ENCODE measurements at regions of chr10 and their contacts with region 1.

Region 1: GRCh38 chr10:77641788-77642397 is 4.3 kb upstream of the KCNMA1 start:
- DNase-seq: peak; percentile 45
- H3K4me3 ChIP-seq: no peak overlapping the region
- CTCF ChIP-seq: peak; percentile 50

Region 2: GRCh38 chr10:77251297-77252013 is 390.4 kb before region 1 on chr10:
- CTCF ChIA-PET with region 1: interaction called, 41 read pairs
- POLR2A ChIA-PET with region 1: no interaction called
- DNase-seq: no peak
- H3K4me3 ChIP-seq: no peak overlapping the region
- CTCF ChIP-seq: peak; percentile 68

Region 3: DNA sequence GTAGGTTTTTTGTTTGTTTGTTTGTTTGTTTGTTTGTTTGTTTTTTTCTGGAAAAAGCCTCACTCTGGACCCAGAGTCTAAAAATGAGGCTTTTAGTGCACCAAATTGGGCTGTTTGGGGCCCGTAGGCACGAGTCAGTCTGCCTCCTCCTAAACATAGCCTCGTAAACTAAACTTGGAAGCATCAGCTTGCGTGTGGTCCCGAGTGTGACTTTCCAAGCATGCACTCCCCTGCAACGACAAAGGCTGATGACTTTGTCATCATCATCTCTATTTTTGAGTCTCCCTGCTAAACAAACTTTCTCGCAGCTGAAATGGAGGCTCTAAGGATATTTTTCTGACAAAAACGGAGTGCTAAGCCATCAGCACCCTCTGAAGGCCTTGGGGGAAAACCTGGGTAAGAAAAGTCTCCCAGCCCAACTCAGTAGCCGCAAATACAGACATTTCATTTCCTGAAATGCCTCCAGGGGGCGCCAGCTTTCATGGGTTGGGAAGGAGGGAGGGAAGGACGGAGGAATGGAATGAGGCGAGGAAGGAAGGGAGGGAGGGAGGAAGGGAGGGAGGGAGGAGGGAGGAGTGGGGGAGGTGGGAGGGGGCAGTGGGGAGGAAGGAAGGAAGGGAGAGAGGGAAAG is 250.2 kb before region 1 on chr10:
- CTCF ChIA-PET with region 1: interaction called, 102 read pairs
- POLR2A ChIA-PET with region 1: interaction called, 4 read pairs
- DNase-seq: peak; percentile 49
- H3K4me3 ChIP-seq: no peak overlapping the region
- CTCF ChIP-seq: peak; percentile 83

Region 4: GRCh38 chr10:77428691-77429395 is 213.1 kb before region 1 on chr10:
- CTCF ChIA-PET with region 1: interaction called, 50 read pairs
- POLR2A ChIA-PET with region 1: no interaction called
- DNase-seq: peak; percentile 51
- H3K4me3 ChIP-seq: no peak overlapping the region
- CTCF ChIP-seq: peak; percentile 87

Region 5: DNA sequence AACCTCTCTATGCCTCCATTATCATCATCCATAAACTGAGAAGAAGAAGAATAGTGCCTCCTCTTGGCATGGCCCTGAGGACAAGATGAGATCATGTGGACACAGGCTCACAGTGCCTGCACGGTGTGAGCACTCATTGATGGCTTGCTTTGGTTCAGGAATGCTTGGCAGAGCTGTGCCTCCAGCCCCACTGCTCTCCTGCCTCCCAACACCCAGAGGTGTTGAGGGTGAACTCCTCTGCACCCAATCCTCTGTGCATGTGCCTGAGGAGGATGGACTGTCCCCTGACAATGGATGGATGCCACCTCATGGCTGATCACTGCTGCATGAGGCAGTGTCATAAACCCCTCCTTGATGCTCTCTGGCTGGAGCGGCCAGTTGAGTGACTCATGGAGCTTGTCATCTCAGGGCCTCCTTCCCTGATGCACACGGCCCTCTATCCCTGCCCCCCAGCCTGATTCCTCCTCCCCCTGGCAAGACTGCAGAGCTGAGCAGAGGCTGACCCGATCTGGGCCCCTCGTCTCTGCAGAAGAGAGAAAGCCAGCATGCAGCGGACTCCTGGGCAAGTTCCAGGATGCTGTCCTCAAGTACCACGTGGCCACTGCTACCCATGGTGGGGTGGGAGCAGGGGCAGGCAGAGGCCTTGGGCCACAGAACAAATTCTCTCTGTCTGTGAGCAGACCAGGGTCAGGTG is 140.6 kb before region 1 on chr10:
- CTCF ChIA-PET with region 1: interaction called, 72 read pairs
- POLR2A ChIA-PET with region 1: interaction called, 4 read pairs
- DNase-seq: peak; percentile 82
- H3K4me3 ChIP-seq: no peak overlapping the region
- CTCF ChIP-seq: no peak

Region 6: GRCh38 chr10:77661100-77661499 is 19.2 kb after region 1 on chr10:
- CTCF ChIA-PET with region 1: interaction called, 11 read pairs
- POLR2A ChIA-PET with region 1: no interaction called
- DNase-seq: no peak
- H3K4me3 ChIP-seq: no peak overlapping the region
- CTCF ChIP-seq: no peak

Region 7: DNA sequence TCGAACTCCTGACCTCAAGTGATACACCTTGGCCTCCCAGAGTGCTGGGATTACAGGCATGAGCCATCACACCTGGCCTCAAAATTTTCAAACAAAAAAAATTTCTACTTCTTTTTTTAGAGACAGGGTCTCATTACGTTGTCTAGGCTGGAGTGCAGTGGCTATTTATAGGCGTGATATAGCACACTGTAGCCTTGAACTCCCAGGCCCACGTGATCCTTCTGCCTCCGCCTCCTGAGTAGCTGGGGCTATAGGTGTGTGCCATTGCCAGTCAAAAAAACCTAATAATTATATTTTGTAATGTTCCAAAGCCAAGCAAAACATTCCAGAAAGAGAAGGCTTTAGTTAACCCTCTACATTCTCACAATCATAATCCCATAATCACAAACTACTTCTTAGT is 373.7 kb after region 1 on chr10:
- CTCF ChIA-PET with region 1: no interaction called
- POLR2A ChIA-PET with region 1: no interaction called
- DNase-seq: no peak
- H3K4me3 ChIP-seq: no peak overlapping the region
- CTCF ChIP-seq: no peak